Activated T-helper 1 cell treated with anti-CD3 and anti-CD28 coated beads, Interleukin-12 subunit alpha, Interleukin-12 subunit beta, Interleukin-2, Interleukin-4 antibody, amounts not matched to agents 30 ng/mL and 10 ng/mL and 1 ng/mL, durations not matched to agents 14 hours and 24 hours and 36 hours (primary cell): ENCODE measurements at regions of chr2 and their contacts with region 1.

Region 1: GRCh38 chr2:70248181-70248847 is at the start of gene TIA1:
- DNase-seq: peak; percentile 98
- H3K4me3 Mint-ChIP-seq: peak within 1 kb of the TSS; percentile 99
- H3K27ac Mint-ChIP-seq: peak within 1 kb of the TSS; percentile 99
- H3K4me1 Mint-ChIP-seq: peaks cover 42% of the 10 kb centered on the region
- H3K27me3 Mint-ChIP-seq: no peaks in the 10 kb centered on the region
- total RNA-seq, gene TIA1: 96.8 and 101 TPM in 2 replicates

Region 2: GRCh38 chr2:69386789-69387734 is 861.3 kb before region 1 on chr2 and contains the start of gene GFPT1:
- intact Hi-C with region 1: loop called (anchors 5 kb)
- DNase-seq: peak; percentile 93
- H3K4me3 Mint-ChIP-seq: peak within 1 kb of the TSS; percentile 87
- H3K27ac Mint-ChIP-seq: peak within 1 kb of the TSS; percentile 81
- H3K4me1 Mint-ChIP-seq: peaks cover 46% of the 10 kb centered on the region
- H3K27me3 Mint-ChIP-seq: no peaks in the 10 kb centered on the region
- total RNA-seq, gene GFPT1: 47.3 and 52.3 TPM in 2 replicates

Region 3: GRCh38 chr2:69789175-69789721 is 459.1 kb before region 1 on chr2:
- intact Hi-C with region 1: no loop called
- DNase-seq: no peak
- H3K4me3 Mint-ChIP-seq: no peak overlapping the region
- H3K27ac Mint-ChIP-seq: no peak overlapping the region
- H3K4me1 Mint-ChIP-seq: peaks cover 14% of the 10 kb centered on the region
- H3K27me3 Mint-ChIP-seq: no peaks in the 10 kb centered on the region

Region 4: DNA sequence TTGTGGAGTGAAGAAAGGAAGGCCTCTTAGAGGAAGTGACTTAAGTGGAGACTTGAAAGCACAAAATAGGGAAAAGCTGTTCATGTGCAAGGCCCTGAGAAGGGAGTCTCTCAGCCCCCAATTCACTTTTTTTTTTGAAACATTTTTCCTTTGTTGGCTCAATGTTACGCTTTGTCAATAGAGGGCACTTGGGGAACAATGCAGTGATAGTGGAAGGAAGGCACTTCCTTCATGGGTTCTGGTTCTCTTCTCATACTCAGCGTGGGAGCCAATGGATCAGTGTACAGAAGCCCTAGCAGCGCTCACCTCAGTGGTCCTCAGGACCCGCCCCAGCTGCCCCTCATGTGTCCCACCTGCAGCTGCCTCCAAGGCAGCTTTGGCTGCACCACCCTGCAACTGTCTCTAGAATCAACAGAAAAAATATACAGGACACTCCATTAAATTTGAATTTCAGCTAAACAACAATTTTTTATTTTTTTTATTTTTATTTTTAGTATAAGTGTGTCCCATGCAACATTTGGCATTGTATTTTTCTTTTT is 48.9 kb before region 1 on chr2:
- intact Hi-C with region 1: no loop called
- DNase-seq: no peak
- H3K4me3 Mint-ChIP-seq: no peak overlapping the region
- H3K27ac Mint-ChIP-seq: no peak overlapping the region
- H3K4me1 Mint-ChIP-seq: no peaks in the 10 kb centered on the region
- H3K27me3 Mint-ChIP-seq: peaks cover 1% of the 10 kb centered on the region

Region 5: GRCh38 chr2:70214953-70215549 is 33.3 kb before region 1 on chr2:
- intact Hi-C with region 1: loop called (anchors 5 kb)
- DNase-seq: no peak
- H3K4me3 Mint-ChIP-seq: no peak overlapping the region
- H3K27ac Mint-ChIP-seq: no peak overlapping the region
- H3K4me1 Mint-ChIP-seq: peaks cover 22% of the 10 kb centered on the region
- H3K27me3 Mint-ChIP-seq: no peaks in the 10 kb centered on the region

Region 6: GRCh38 chr2:70258532-70258874 is 10.2 kb after region 1 on chr2:
- intact Hi-C with region 1: loop called (anchors 1 kb)
- DNase-seq: no peak
- H3K4me3 Mint-ChIP-seq: peak overlapping the region; percentile 87
- H3K27ac Mint-ChIP-seq: peak overlapping the region; percentile 23
- H3K4me1 Mint-ChIP-seq: peaks cover 30% of the 10 kb centered on the region
- H3K27me3 Mint-ChIP-seq: no peaks in the 10 kb centered on the region